HAP-1 (cell line): ENCODE measurements at regions of chr9 and their contacts with region 1.

Region 1: GRCh38 chr9:14768405-14769229 is 46.1 kb upstream of the CER1 start:
- DNase-seq: peak; percentile 43 to 64
- H3K4me3 ChIP-seq: no peak overlapping the region
- H3K4me1 ChIP-seq: no peaks in the 10 kb centered on the region
- H3K27me3 ChIP-seq: peaks cover 8% of the 10 kb centered on the region; the same call in 1 of the 2 replicates

Region 2: DNA sequence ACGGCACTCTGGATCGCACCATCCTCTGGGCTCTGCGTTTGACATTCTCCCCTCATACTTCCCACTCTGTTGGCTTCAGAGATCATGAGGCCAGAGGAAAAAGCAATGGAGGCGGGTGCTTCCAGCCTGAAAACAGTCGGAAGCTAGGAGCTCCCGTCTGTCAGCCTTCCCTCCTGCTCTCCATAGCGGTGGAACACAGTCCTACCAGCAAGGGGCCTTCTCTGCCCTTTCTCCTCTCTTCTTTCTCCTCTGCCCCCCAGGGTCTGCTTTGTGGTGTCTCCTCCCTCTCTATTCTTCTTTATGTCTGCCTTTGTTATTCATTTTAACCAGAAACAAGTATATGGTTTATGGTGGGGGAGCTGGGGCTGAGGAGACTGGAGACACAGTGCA is 302.2 kb before region 1 on chr9:
- in situ Hi-C with region 1: loop called (anchors 5 kb)
- DNase-seq: peak in 1 of 2 experiments; percentile 12
- H3K4me3 ChIP-seq: no peak overlapping the region
- H3K4me1 ChIP-seq: 0 out of 2 replicates have a peak, but pooled peaks cover 3% of the 10 kb centered on the region
- H3K27me3 ChIP-seq: no peaks in the 10 kb centered on the region; the same call in 1 of the 2 replicates

Region 3: DNA sequence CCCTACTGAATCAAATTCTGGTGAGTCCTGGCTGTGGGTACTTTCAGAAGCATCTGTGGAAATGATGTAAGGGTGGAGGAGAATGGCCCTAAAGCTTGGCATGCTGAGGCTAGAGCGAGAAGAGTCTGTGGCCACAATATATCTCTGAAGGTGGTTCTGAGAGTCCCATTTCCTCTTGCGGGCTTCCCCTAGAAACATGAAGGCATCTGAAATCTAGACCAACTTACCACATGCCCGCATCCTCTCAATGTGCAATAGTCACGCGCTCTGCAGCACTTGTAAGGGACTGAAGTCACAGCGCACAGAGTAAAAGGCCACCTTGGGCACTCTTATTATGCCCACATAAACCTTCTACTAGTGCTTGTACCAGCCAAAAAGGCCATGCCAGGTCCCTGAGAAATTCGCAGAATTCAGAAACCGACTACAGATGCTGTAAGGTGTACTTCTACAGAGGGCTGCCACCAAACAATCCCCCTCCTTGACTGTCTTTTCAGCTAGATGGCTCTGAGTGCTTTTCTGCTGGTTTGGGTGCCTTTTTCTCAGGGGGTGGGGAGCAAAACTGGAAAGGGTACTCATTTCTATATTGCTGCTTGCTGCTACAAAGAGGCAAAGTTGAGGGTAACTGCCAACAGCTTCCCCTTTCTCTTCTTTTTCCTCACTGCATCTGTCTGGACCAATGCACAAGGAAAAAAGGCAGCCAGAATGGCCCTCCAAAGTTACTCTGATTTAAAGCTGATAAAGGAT is 182.7 kb before region 1 on chr9:
- in situ Hi-C with region 1: no loop called
- DNase-seq: no peak
- H3K4me3 ChIP-seq: no peak overlapping the region
- H3K4me1 ChIP-seq: no peaks in the 10 kb centered on the region
- H3K27me3 ChIP-seq: no peaks in the 10 kb centered on the region